Calu3 (cell line): ENCODE measurements at regions of chr3 and their contacts with region 1.

Region 1: GRCh38 chr3:111737706-111738086 is 121.4 kb upstream of the PHLDB2 start:
- DNase-seq: peak; percentile 18
- H3K4me3 Mint-ChIP-seq: no peak overlapping the region
- H3K27ac Mint-ChIP-seq: no peak overlapping the region
- H3K4me1 Mint-ChIP-seq: peaks cover 76% of the 10 kb centered on the region
- H3K27me3 Mint-ChIP-seq: no peaks in the 10 kb centered on the region
- CTCF ChIP-seq: no peak

Region 2: DNA sequence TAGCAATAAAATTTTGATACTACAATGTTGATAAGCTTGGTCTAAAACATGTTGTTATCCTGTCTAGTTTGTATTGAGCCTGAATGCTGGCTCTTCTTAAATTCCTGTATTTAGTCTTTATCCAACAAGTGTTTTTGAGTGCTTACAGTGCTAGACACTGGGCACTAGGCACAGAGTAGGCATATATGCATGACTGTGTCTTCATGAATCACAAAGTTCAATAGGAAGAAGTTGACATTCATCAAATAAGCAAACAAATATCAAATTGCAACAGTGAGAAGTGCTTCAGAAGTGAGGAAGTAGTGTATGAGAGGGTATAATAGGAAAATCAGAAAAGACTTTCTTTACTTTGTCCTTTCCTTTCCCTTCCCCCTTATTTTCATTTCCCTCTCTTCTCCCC is 188.9 kb before region 1 on chr3:
- CTCF ChIA-PET with region 1: interaction called, 10 read pairs
- intact Hi-C with region 1: no loop called
- DNase-seq: no peak
- H3K4me3 Mint-ChIP-seq: no peak overlapping the region
- H3K27ac Mint-ChIP-seq: no peak overlapping the region
- H3K4me1 Mint-ChIP-seq: peaks cover 12% of the 10 kb centered on the region
- H3K27me3 Mint-ChIP-seq: no peaks in the 10 kb centered on the region
- CTCF ChIP-seq: no peak

Region 3: GRCh38 chr3:111803123-111803593 is 65.5 kb after region 1 on chr3:
- CTCF ChIA-PET with region 1: no interaction called
- intact Hi-C with region 1: loop called (anchors 5 kb)
- DNase-seq: peak; percentile 32
- H3K4me3 Mint-ChIP-seq: no peak overlapping the region
- H3K27ac Mint-ChIP-seq: no peak overlapping the region
- H3K4me1 Mint-ChIP-seq: peaks cover 41% of the 10 kb centered on the region
- H3K27me3 Mint-ChIP-seq: no peaks in the 10 kb centered on the region
- CTCF ChIP-seq: no peak

Region 4: GRCh38 chr3:111859974-111860859 is 122.5 kb after region 1 on chr3:
- CTCF ChIA-PET with region 1: interaction called, 7 read pairs
- intact Hi-C with region 1: loop called (anchors 5 kb)
- DNase-seq: peak; percentile 79
- H3K4me3 Mint-ChIP-seq: peak overlapping the region; percentile 88
- H3K27ac Mint-ChIP-seq: peak overlapping the region; percentile 80
- H3K4me1 Mint-ChIP-seq: peaks cover 46% of the 10 kb centered on the region
- H3K27me3 Mint-ChIP-seq: no peaks in the 10 kb centered on the region
- CTCF ChIP-seq: peak; percentile 25